AG04450 (cell line): ENCODE measurements at regions of chr10 and their contacts with region 1.

Region 1: DNA sequence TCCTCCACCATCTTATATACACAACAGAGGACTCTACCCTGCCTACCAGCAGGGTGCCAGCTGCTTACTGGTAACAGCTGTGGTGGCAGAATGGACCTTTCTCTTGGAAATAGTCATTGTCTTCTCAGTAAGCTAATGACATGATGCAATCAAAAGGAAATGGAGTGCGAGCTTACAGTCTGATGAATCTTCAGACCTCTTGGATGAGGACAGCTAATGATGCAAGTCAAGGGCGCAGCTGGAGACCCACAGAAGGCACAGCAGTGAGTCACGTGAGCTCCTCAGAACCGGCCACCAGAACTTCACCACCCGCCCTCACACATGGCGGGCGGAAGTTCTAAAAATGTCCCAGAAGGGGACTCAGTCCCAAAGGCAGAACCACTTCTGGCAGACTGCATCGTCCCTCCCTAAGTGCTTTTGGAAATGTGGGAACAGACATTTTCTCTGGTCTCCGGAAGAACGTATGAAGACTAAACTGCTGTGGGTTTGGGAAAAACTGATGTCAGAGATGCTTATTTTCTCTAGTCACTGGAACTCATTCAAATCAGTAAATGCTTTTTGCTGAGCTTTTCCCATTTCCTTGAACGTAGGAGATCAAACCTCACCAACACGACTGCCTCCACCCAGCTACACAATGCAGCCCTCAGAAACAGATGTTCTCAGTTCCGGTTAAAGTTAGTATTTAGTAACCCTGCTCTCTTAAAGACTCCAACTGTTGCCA is 96.4 kb downstream of the FAS start:
- DNase-seq: peak; percentile 43
- H3K4me3 ChIP-seq: no peak overlapping the region
- H3K27ac ChIP-seq: peak overlapping the region; percentile 43
- H3K27me3 ChIP-seq: no peaks in the 10 kb centered on the region
- CTCF ChIP-seq: no peak

Region 2: DNA sequence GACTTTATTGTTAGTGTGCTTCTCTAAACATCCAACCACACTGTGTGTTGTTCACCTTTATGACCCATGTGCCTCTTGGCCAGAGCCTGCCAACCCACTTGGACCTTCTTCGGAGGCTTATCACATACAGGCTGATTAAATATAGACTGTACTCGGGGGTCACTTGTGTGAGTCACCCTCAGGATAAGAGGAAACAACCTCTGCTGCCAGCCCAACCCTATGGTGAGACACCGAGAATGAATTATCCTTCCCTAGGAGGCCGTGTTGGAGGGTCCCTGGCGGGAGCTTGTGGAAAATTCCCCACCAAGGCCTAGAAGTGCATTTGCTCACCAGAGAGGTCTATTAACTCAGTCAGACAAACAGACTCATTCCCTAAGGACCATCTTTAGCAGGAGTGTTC is 33.4 kb before region 1 on chr10:
- CTCF ChIA-PET with region 1: no interaction called
- POLR2A ChIA-PET with region 1: no interaction called
- DNase-seq: no peak
- H3K4me3 ChIP-seq: no peak overlapping the region
- H3K27ac ChIP-seq: no peak overlapping the region
- H3K27me3 ChIP-seq: no peaks in the 10 kb centered on the region
- CTCF ChIP-seq: no peak

Region 3: DNA sequence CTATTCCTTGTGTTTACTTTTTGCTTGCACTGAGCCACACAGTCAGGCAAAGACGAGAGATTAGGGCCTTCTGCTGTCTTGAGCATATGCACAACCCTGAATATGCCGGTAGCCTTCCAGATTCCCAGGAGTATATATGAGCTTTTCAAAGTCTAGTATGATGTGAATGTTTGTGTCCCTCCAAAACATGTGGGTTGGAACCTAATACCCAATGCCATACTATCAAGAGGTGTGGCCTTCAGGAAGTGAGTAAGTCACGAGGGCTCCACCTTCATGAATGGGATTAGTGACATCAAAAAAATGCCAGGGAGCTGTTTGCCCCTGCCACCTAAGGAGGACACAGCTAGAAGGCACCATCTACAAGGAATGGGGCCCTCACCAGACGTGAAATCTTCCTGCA is 15.0 kb after region 1 on chr10:
- CTCF ChIA-PET with region 1: no interaction called
- POLR2A ChIA-PET with region 1: interaction called, 10 read pairs
- DNase-seq: no peak
- H3K4me3 ChIP-seq: no peak overlapping the region
- H3K27ac ChIP-seq: no peak overlapping the region
- H3K27me3 ChIP-seq: no peaks in the 10 kb centered on the region
- CTCF ChIP-seq: no peak

Region 4: DNA sequence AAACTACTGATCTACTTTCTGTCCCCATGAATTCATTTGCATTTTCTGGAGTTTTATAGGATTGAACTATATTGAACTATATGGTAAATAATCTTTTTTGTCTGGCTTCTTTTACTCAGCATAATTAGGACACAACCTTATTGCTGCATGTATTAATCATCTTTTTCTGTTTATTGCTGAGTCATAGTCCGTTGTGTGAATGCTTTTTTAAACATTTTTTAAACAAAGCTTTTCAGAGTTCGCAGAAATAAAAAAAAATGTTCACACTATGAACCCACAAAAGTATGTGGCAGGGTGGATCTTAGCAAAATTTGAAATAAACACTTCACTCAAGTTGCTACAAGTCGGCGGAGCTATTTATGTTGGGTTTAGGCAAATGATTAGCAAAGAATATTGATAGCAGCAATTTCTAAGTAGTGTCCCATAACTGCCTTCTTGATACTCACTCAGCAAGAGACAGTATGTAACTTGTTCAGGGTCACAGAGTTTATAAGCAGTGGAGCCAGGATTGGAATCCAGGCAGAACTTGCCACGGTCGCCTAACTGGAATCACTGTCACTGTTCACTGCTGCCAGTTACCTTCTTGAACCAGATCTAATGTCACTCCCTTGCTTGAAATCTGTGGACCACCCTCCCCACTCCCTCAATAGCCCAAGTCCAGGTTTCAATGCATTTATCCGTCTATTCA is 114.5 kb after region 1 on chr10:
- CTCF ChIA-PET with region 1: no interaction called
- POLR2A ChIA-PET with region 1: no interaction called
- DNase-seq: no peak
- H3K4me3 ChIP-seq: no peak overlapping the region
- H3K27ac ChIP-seq: no peak overlapping the region
- H3K27me3 ChIP-seq: no peaks in the 10 kb centered on the region
- CTCF ChIP-seq: no peak